ENCODE measurements at regions of chr4 and their contacts with region 1.

Region 1: DNA sequence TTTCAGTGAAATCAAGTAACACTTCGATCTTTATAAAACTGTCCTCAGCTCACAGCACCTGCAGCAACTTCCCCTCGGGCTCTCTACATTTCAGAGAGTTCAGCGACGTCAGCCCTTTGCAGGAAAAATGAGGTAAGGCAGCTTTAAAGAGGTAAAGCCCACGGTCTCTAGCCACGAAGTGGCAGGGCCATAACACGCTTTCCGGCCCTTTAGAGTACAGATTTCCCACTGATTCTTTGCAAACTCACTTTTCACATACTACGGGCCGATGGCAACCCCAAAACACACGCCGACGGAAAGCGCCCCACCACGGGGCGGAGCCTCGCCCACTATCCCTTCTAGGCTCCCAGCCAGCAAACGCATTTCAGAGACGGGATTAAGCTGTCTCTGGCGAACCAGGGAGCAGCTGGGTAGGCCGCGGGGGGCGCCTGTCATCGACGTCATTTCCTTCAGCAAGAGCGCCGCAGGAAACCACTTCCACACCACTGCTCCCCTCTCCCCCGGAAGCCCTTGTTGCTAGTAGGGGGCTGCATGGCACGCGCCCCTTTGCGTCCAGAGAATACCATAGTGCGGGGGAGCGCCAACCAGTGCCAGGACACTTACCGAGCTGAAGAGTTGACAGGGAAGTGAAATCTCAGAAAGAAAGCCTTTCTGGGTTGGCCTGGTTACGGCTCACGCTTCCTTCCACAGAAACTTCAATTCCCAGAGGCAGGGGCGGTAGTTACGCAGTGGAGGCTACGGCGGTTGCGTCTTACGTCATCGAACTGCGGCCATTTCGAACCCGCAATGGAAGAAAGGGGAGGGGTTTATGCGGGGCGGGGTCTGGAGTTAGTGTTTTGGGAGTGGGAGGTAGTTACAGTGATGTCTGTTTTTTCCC is at the start of gene TRMT10A:
- DNase-seq: peak; percentile 86 to 99 (median 97)
- ATAC-seq: peak; percentile 88 to 93 (median 92)
- H3K4me3 ChIP-seq: peak within 1 kb of the TSS; percentile 80 to 91
- H3K4me3 Mint-ChIP-seq: peak within 1 kb of the TSS; percentile 86 to 99 (median 98)
- H3K27ac ChIP-seq: peak within 1 kb of the TSS; percentile 99
- H3K27ac Mint-ChIP-seq: peak within 1 kb of the TSS; percentile 99 to 100
- H3K4me1 ChIP-seq: peaks cover 2 to 12% of the 10 kb centered on the region in 2 experiments
- H3K4me1 Mint-ChIP-seq: peaks cover 17 to 26% (median 20%) of the 10 kb centered on the region in 3 donors
- H3K27me3 ChIP-seq: peaks cover 4 to 5% of the 10 kb centered on the region in 2 experiments
- H3K27me3 Mint-ChIP-seq: peaks cover 24 to 25% of the 10 kb centered on the region in 2 donors
- total RNA-seq, gene TRMT10A: 3.4 to 5.3 (median 4.0) TPM

Region 2: GRCh38 chr4:99552872-99553271 is 10.7 kb before region 1 on chr4:
- CTCF ChIA-PET with region 1: interaction called in 1 of 2 experiments, 3 read pairs
- POLR2A ChIA-PET with region 1: interaction called in 1 of 2 experiments, 14 read pairs
- DNase-seq: no peak
- ATAC-seq: no peak
- H3K4me3 ChIP-seq: no peak overlapping the region
- H3K4me3 Mint-ChIP-seq: no peak overlapping the region
- H3K27ac ChIP-seq: no peak overlapping the region
- H3K27ac Mint-ChIP-seq: no peak overlapping the region
- H3K4me1 ChIP-seq: no peaks in the 10 kb centered on the region
- H3K4me1 Mint-ChIP-seq: no peaks in the 10 kb centered on the region
- H3K27me3 ChIP-seq: no peaks in the 10 kb centered on the region
- H3K27me3 Mint-ChIP-seq: no peaks in the 10 kb centered on the region

Region 3: DNA sequence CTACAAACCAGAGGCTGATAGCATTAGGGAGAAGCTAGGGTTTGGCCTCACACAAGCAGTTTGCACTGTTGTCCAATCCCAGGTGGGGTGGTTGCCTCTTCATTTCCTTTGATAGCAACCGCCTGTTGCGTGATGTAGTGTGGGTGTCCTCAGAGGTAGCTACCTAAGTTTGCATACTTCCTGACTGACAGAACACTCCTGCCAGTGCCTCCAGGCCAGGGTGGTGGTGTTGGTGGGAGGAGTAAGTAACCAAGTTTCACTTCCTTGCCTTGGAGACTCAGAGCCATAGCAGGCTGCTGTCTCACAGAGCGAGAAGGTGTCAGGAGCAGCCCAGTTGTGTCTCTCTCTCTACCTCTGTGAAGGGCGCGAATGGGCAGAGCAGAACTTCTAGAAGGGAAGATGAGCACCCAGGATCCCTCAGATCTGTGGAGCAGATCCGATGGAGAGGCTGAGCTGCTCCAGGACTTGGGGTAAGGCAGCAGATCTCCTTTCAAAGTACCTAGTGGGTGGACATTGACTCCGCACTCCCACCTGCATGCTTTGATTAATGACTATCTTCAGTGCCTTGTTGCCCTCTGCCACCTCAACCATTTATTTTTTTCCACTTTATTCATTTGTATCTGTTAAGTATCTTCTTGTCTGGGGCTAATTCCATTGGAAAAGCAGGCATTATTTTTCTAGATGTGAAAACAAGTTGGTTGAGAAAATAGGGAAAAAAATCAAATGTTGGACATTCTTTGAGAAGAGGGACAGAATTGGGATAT is 253.2 kb after region 1 on chr4 and contains the start of gene DAPP1:
- CTCF ChIA-PET with region 1: interaction called, 4 to 10 read pairs
- POLR2A ChIA-PET with region 1: interaction called in 1 of 2 experiments, 9 read pairs
- DNase-seq: peak; percentile 53 to 89 (median 77)
- ATAC-seq: peak; percentile 97 to 98 (median 98)
- H3K4me3 ChIP-seq: peak within 1 kb of the TSS; percentile 51 to 75
- H3K4me3 Mint-ChIP-seq: peak within 1 kb of the TSS; percentile 85 to 91 (median 89)
- H3K27ac ChIP-seq: peak within 1 kb of the TSS; percentile 65
- H3K27ac Mint-ChIP-seq: peak within 1 kb of the TSS; percentile 89 to 96
- H3K4me1 ChIP-seq: peaks cover 22 to 26% of the 10 kb centered on the region in 2 experiments
- H3K4me1 Mint-ChIP-seq: peaks cover 60 to 62% (median 62%) of the 10 kb centered on the region in 3 donors
- H3K27me3 ChIP-seq: no peaks in the 10 kb centered on the region
- H3K27me3 Mint-ChIP-seq: no peaks in the 10 kb centered on the region
- total RNA-seq, gene DAPP1: 12.9 to 18.7 (median 14.3) TPM

Measured in T-cell (primary cell).